ENCODE measurements at regions of chr3 and their contacts with region 1.

Region 1: DNA sequence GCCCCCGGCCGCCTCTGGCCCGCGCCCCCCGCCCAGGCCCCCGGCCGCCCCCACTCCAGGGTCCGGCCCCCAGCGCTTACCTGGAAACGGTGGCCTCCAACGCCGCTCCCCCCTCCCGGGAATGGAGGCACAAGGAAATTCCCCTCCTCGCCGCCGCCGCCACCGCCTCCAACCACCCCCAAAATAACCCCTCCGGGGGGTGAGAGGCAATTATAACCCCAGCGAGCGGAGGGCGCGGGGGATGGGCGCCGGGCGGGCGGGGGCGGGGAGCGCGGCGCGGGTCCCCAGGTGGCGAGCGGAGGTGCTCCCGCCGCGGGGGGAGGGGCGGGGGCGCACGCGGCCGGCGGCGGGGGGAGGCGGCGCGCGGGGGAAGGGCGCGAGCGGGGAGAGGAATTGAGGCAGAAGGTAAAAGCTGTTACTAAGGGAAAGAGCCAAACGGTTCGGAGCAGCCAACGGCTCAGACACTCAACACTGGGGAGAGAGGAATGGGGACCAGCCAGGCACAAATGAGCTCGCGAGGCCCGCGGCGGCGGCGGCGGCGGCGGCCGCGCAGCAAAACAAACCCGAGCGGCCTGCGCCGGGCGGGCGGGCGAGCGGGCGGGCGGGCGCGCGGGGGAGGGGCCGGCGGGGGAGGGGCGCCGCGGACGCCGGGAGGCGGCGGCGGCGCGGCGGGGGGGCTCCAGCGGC is at the start of gene TBL1XR1:
- DNase-seq: peak; percentile 88 to 95
- ATAC-seq: peak; percentile 52 to 84 (median 72)
- H3K4me3 ChIP-seq: peak within 1 kb of the TSS; percentile 85
- H3K4me3 Mint-ChIP-seq: peak within 1 kb of the TSS; percentile 94
- H3K27ac ChIP-seq: peak within 1 kb of the TSS; percentile 90
- H3K27ac Mint-ChIP-seq: peak within 1 kb of the TSS; percentile 93 to 97
- H3K4me1 ChIP-seq: peaks cover 21% of the 10 kb centered on the region
- H3K4me1 Mint-ChIP-seq: peaks cover 56 to 69% of the 10 kb centered on the region in 2 donors
- H3K27me3 ChIP-seq: no peaks in the 10 kb centered on the region
- H3K27me3 Mint-ChIP-seq: no peaks in the 10 kb centered on the region
- CTCF ChIP-seq: no peak
- total RNA-seq, gene TBL1XR1: 74.6 to 118 (median 81.7) TPM

Region 2: GRCh38 chr3:177050501-177051237 is 146.5 kb before region 1 on chr3:
- intact Hi-C with region 1: loop called (anchors 5 kb)
- DNase-seq: peak in 1 of 2 donors; percentile 78
- ATAC-seq: peak; percentile 71 to 88 (median 82)
- H3K4me3 ChIP-seq: no peak overlapping the region
- H3K4me3 Mint-ChIP-seq: no peak overlapping the region
- H3K27ac ChIP-seq: no peak overlapping the region
- H3K27ac Mint-ChIP-seq: no peak overlapping the region
- H3K4me1 ChIP-seq: no peaks in the 10 kb centered on the region
- H3K4me1 Mint-ChIP-seq: peaks cover 0 to 8% of the 10 kb centered on the region in 2 donors
- H3K27me3 ChIP-seq: no peaks in the 10 kb centered on the region
- H3K27me3 Mint-ChIP-seq: no peaks in the 10 kb centered on the region
- CTCF ChIP-seq: peak; percentile 87

Region 3: DNA sequence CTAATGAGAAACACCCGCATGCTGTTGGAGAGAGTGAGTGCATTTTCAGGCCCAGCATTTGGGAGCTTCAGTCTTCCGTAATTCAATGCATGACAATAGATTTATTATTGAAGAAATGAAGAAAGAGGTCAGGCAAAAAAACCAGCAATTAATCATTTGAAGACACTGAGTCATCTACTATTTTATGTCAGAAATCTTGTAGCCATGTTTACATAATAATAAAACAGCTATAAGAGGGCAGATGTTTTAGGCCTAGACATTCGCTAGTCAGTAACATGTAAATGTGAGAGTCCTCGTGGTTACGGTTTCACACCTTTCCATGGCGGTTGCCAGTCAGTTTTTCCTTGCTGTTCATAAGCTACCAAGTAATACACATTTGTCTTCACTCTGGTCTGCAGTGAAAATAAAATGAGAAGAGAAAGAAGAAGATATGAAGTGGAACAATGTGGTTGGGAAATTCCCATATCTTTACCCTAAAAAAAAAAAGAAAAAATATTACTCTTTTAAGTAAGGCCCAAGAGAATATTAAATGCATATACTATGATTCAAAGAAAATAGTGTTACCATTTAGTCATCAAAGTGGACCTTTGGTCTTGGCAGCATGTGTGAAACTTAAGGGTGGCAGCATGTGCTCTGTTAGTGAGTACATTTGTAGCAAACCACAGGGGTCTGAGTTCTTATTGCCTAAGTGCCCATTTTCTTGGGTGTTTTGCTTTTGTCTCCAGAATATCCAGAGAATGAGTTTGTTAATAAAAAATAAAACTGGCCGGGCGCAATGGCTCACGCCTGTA is 140.6 kb after region 1 on chr3:
- intact Hi-C with region 1: loop called (anchors 2 kb)
- DNase-seq: peak; percentile 66 to 78
- ATAC-seq: peak; percentile 70 to 83 (median 72)
- H3K4me3 ChIP-seq: no peak overlapping the region
- H3K4me3 Mint-ChIP-seq: peak overlapping the region; percentile 57
- H3K27ac ChIP-seq: peak overlapping the region; percentile 37
- H3K27ac Mint-ChIP-seq: peak overlapping the region; percentile 74 to 81
- H3K4me1 ChIP-seq: peaks cover 29% of the 10 kb centered on the region
- H3K4me1 Mint-ChIP-seq: peaks cover 45 to 46% of the 10 kb centered on the region in 2 donors
- H3K27me3 ChIP-seq: no peaks in the 10 kb centered on the region
- H3K27me3 Mint-ChIP-seq: peaks cover 2 to 7% of the 10 kb centered on the region in 2 donors
- CTCF ChIP-seq: no peak

Region 4: DNA sequence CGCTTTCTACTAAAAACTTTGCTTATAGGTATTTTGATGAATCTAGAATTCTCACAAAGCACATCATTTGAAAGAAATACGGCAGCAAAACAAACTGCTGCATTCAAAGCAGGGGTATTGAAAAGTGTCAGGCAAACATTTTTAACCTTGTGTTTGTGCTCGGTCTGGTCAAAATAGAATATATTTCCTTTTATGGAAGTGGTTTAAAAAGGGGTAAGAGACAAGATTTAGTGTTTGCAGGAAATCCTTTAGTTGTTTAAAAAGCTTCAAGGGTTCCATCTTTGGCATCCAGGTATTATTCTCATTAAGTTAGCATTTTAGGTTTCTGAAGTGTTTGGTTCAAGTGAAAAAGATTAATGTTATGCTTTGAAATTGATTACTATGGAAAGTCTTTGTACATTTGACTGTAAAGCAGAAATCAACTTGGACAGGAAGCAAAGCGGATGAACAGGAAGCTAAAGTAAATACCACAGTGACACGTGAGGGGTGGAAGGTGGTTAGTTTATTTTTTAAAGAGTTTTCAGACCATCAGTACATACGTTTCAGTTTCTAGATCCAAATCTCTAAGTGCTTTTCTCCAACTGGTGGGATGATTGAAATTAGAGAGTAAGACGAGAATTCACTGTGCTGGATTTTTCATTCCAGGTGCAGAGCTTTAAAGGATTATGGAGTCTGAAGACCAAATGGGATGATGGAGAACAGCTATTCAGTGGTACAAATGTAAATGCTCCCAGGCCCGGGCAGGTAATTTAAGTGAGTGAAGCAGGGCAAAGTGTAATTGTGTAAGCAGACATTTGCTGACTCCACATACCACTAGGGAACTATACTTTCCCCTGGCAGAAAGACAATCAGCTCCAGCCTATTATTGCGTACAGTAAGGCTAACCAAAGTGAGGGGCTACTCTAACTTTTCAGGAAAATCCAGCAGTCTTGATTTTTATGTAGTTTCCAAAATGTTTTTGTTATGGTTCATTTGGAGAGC is 341.9 kb after region 1 on chr3:
- intact Hi-C with region 1: loop called (anchors 10 kb)
- DNase-seq: peak in 1 of 2 donors; percentile 62
- ATAC-seq: peak; percentile 57 to 90 (median 74)
- H3K4me3 ChIP-seq: no peak overlapping the region
- H3K4me3 Mint-ChIP-seq: peak overlapping the region; percentile 91
- H3K27ac ChIP-seq: peak overlapping the region; percentile 63
- H3K27ac Mint-ChIP-seq: peak overlapping the region; percentile 90 to 92
- H3K4me1 ChIP-seq: peaks cover 19% of the 10 kb centered on the region
- H3K4me1 Mint-ChIP-seq: peaks cover 31 to 47% of the 10 kb centered on the region in 2 donors
- H3K27me3 ChIP-seq: no peaks in the 10 kb centered on the region
- H3K27me3 Mint-ChIP-seq: no peaks in the 10 kb centered on the region
- CTCF ChIP-seq: no peak

Region 5: GRCh38 chr3:177679568-177680441 is 482.6 kb after region 1 on chr3:
- intact Hi-C with region 1: loop called (anchors 5 kb)
- DNase-seq: peak in 1 of 2 donors; percentile 35
- ATAC-seq: peak; percentile 57 to 80 (median 65)
- H3K4me3 ChIP-seq: no peak overlapping the region
- H3K4me3 Mint-ChIP-seq: peak overlapping the region; percentile 25
- H3K27ac ChIP-seq: peak overlapping the region; percentile 57
- H3K27ac Mint-ChIP-seq: peak overlapping the region; percentile 82 to 84
- H3K4me1 ChIP-seq: peaks cover 23% of the 10 kb centered on the region
- H3K4me1 Mint-ChIP-seq: peaks cover 55 to 59% of the 10 kb centered on the region in 2 donors
- H3K27me3 ChIP-seq: no peaks in the 10 kb centered on the region
- H3K27me3 Mint-ChIP-seq: no peaks in the 10 kb centered on the region
- CTCF ChIP-seq: no peak